ENCODE measurements at regions of chr2 and their contacts with region 1.

Region 1: GRCh38 chr2:37837628-37838328 is 87.3 kb upstream of the RMDN2 start:
- DNase-seq: peak; percentile 54
- H3K4me3 ChIP-seq: no peak overlapping the region
- H3K27ac ChIP-seq: peak overlapping the region; percentile 14 to 80 (median 61)
- H3K4me1 ChIP-seq: peaks cover 0 to 5% (median 2%) of the 10 kb centered on the region in 4 donors
- H3K27me3 ChIP-seq: no peaks in the 10 kb centered on the region
- CTCF ChIP-seq: no peak
- EP300 ChIP-seq: peak; percentile 97
- POLR2A ChIP-seq: no peak

Region 2: DNA sequence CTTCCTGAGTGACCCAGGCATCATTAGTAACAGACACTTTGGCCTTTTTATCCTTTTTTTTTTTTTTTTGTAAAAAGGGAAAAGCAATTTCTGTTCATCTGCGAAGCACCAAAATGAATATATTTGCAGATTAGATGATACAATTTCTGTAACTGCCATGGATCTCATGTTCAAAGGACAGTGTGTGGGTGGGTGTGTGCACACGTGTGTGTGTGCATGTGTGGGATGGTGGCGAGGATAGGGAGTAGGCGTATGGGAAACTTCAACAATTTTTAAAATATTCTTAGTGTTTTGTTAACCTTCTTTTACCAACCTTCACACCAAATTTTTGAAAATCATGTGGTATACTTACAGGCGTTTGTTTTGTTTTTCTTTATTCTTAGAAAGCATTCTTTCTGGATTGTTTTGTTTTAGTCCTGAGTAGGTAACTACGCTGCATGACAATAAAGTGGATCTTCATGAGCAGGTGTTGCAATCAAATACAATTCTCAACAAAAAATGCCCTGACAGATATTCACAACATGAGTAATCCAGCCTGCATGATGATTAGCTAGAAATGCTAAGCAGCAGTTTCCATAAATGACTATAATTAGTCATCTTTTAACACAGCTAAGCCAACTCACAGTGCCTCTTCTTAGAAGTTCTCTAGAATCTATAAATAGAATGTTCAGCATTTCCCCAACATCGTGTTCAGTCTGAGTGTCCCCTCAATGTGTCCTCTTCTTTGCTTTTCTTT is 33.8 kb after region 1 on chr2:
- in situ Hi-C with region 1: no loop called
- intact Hi-C with region 1: loop called (anchors 5 kb)
- DNase-seq: no peak
- H3K4me3 ChIP-seq: no peak overlapping the region
- H3K27ac ChIP-seq: peak overlapping the region; percentile 69 to 87 (median 78)
- H3K4me1 ChIP-seq: peaks cover 5 to 16% (median 11%) of the 10 kb centered on the region in 4 donors
- H3K27me3 ChIP-seq: no peaks in the 10 kb centered on the region
- CTCF ChIP-seq: no peak
- EP300 ChIP-seq: no peak
- POLR2A ChIP-seq: no peak

Measured in transverse colon (tissue), 4 donors.